Colonic mucosa (tissue), 4 donors: ENCODE measurements at regions of chr2 and their contacts with region 1.

Region 1: DNA sequence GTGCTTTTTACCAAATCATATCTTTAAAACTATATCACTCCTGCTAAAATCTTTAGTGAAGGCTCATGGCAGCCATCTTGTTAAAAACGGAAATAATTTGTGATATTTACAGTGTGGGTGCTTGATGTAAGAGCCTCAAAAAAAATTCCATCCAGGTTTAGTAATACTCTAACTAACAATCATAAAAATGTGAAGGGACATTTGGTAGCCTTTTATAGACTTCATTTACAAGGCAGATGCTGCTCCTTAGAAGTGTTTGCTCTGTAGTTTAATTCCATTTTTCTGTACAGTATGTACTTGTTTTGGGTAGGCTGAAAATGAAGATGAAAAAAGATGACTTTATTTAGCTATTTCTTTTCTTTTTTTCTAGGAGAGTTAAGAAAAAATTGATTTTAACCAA is 525.0 kb downstream of the ZEB2 start:
- DNase-seq: no peak
- H3K4me3 ChIP-seq: no peak overlapping the region
- H3K27ac ChIP-seq: no peak overlapping the region
- H3K4me1 ChIP-seq: no peaks in the 10 kb centered on the region
- H3K27me3 ChIP-seq: no peaks in the 10 kb centered on the region
- CTCF ChIP-seq: no peak

Region 2: GRCh38 chr2:143533846-143534245 is 461.1 kb before region 1 on chr2:
- intact Hi-C with region 1: no loop called
- DNase-seq: no peak
- H3K4me3 ChIP-seq: no peak overlapping the region
- H3K27ac ChIP-seq: no peak overlapping the region
- H3K4me1 ChIP-seq: no peaks in the 10 kb centered on the region
- H3K27me3 ChIP-seq: no peaks in the 10 kb centered on the region
- CTCF ChIP-seq: no peak

Region 3: GRCh38 chr2:143936848-143937722 is 57.9 kb before region 1 on chr2:
- intact Hi-C with region 1: no loop called
- DNase-seq: no peak
- H3K4me3 ChIP-seq: peak overlapping the region; percentile 31
- H3K27ac ChIP-seq: peak overlapping the region; percentile 69
- H3K4me1 ChIP-seq: no peaks in the 10 kb centered on the region
- H3K27me3 ChIP-seq: peaks cover 24% of the 10 kb centered on the region
- CTCF ChIP-seq: no peak

Region 4: DNA sequence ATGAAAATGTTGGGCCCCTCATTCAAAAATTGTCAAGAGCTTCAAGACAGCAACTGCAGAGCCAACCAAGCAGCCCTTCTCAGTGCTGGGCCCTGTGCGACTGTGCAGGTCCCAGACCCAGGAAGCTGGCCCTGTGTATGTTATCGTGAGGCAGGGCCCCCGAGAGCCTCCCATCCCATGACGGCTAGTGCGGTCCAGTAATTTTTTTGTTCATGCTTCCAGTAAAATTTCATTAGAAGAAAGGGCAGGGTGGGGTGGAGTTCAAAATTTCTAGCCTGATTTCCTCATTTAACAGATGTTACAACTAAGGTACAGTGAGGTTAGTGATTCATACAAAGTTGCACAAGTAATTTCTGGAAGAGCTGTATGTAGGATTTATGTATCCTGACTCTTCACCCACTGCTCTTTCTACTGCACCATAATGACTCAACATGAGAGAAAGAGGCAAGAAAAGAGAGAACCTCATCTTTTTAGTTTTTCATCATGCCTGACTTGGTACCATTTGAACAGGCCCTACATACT is 419.4 kb after region 1 on chr2:
- intact Hi-C with region 1: loop called (anchors 5 kb)
- DNase-seq: no peak
- H3K4me3 ChIP-seq: no peak overlapping the region
- H3K27ac ChIP-seq: peak overlapping the region; percentile 1
- H3K4me1 ChIP-seq: no peaks in the 10 kb centered on the region
- H3K27me3 ChIP-seq: no peaks in the 10 kb centered on the region
- CTCF ChIP-seq: no peak